T-cell (primary cell): ENCODE measurements at regions of chr9 and their contacts with region 1.

Region 1: GRCh38 chr9:36407122-36407723 is 7.2 kb upstream of the RNF38 start:
- DNase-seq: peak; percentile 27 to 89 (median 54)
- ATAC-seq: peak; percentile 90 to 92 (median 91)
- H3K4me3 ChIP-seq: no peak overlapping the region
- H3K4me3 Mint-ChIP-seq: no peak overlapping the region
- H3K27ac ChIP-seq: peak overlapping the region; percentile 32
- H3K27ac Mint-ChIP-seq: peak overlapping the region; percentile 70 to 73
- H3K4me1 ChIP-seq: peaks cover 5 to 10% of the 10 kb centered on the region in 2 experiments
- H3K4me1 Mint-ChIP-seq: peaks cover 21 to 32% (median 28%) of the 10 kb centered on the region in 3 donors
- H3K27me3 ChIP-seq: no peaks in the 10 kb centered on the region
- H3K27me3 Mint-ChIP-seq: no peaks in the 10 kb centered on the region

Region 2: GRCh38 chr9:36441966-36442365 is 34.7 kb after region 1 on chr9:
- CTCF ChIA-PET with region 1: interaction called, 8 to 13 read pairs
- POLR2A ChIA-PET with region 1: interaction called in 1 of 2 experiments, 11 read pairs
- DNase-seq: peak in 1 of 35 experiments; percentile 33
- ATAC-seq: peak in 3 of 4 experiments; percentile 57 to 75 (median 74)
- H3K4me3 ChIP-seq: no peak overlapping the region
- H3K4me3 Mint-ChIP-seq: no peak overlapping the region
- H3K27ac ChIP-seq: no peak overlapping the region
- H3K27ac Mint-ChIP-seq: no peak overlapping the region
- H3K4me1 ChIP-seq: peaks cover 9 to 24% of the 10 kb centered on the region in 2 experiments
- H3K4me1 Mint-ChIP-seq: peaks cover 66 to 72% (median 68%) of the 10 kb centered on the region in 3 donors
- H3K27me3 ChIP-seq: no peaks in the 10 kb centered on the region
- H3K27me3 Mint-ChIP-seq: no peaks in the 10 kb centered on the region

Region 3: GRCh38 chr9:36461323-36461722 is 54.1 kb after region 1 on chr9:
- CTCF ChIA-PET with region 1: interaction called in 1 of 2 experiments, 11 read pairs
- POLR2A ChIA-PET with region 1: interaction called in 1 of 2 experiments, 4 read pairs
- DNase-seq: no peak
- ATAC-seq: peak in 1 of 4 experiments; percentile 23
- H3K4me3 ChIP-seq: no peak overlapping the region
- H3K4me3 Mint-ChIP-seq: no peak overlapping the region
- H3K27ac ChIP-seq: peak overlapping the region; percentile 16
- H3K27ac Mint-ChIP-seq: peak overlapping the region; percentile 77 to 85
- H3K4me1 ChIP-seq: peaks cover 21 to 28% of the 10 kb centered on the region in 2 experiments
- H3K4me1 Mint-ChIP-seq: peaks cover 62 to 75% (median 70%) of the 10 kb centered on the region in 3 donors
- H3K27me3 ChIP-seq: no peaks in the 10 kb centered on the region
- H3K27me3 Mint-ChIP-seq: no peaks in the 10 kb centered on the region

Region 4: DNA sequence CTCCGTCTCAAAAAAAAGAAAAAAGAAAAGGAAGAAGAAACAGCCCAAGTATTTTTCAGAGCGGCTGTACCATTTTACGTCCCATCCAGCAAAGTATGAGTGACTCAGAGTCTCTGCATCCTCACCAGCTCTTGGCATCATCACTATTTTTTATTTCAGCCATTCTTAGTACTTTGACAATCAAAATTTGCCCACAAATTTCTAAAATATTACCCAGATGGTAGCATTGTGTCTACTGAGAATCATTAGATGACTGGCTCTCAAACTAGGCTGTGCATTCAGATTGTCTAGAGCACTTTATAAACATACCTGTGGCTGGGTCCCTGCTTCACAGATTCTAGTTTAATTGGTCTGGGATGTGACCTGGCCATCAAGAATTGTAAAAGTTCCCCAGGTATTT is 143.9 kb after region 1 on chr9:
- CTCF ChIA-PET with region 1: interaction called, 49 to 82 read pairs
- POLR2A ChIA-PET with region 1: interaction called in 1 of 2 experiments, 4 read pairs
- DNase-seq: no peak
- ATAC-seq: no peak
- H3K4me3 ChIP-seq: no peak overlapping the region
- H3K4me3 Mint-ChIP-seq: no peak overlapping the region
- H3K27ac ChIP-seq: no peak overlapping the region
- H3K27ac Mint-ChIP-seq: no peak overlapping the region
- H3K4me1 ChIP-seq: peaks cover 0 to 2% of the 10 kb centered on the region in 2 experiments
- H3K4me1 Mint-ChIP-seq: peaks cover 0 to 2% (median 2%) of the 10 kb centered on the region in 3 donors
- H3K27me3 ChIP-seq: peaks cover 0 to 4% of the 10 kb centered on the region in 2 experiments
- H3K27me3 Mint-ChIP-seq: peaks cover 5 to 10% of the 10 kb centered on the region in 2 donors

Region 5: GRCh38 chr9:36728651-36729520 is 321.7 kb after region 1 on chr9:
- CTCF ChIA-PET with region 1: interaction called, 6 to 18 read pairs
- POLR2A ChIA-PET with region 1: no interaction called
- DNase-seq: peak in 30 of 35 experiments; percentile 6 to 70 (median 44)
- ATAC-seq: peak in 3 of 4 experiments; percentile 41 to 67 (median 56)
- H3K4me3 ChIP-seq: no peak overlapping the region
- H3K4me3 Mint-ChIP-seq: no peak overlapping the region
- H3K27ac ChIP-seq: no peak overlapping the region
- H3K27ac Mint-ChIP-seq: no peak overlapping the region
- H3K4me1 ChIP-seq: no peaks in the 10 kb centered on the region
- H3K4me1 Mint-ChIP-seq: peaks cover 0 to 4% (median 0%) of the 10 kb centered on the region in 3 donors
- H3K27me3 ChIP-seq: peaks cover 0 to 7% of the 10 kb centered on the region in 2 experiments
- H3K27me3 Mint-ChIP-seq: no peaks in the 10 kb centered on the region